ENCODE measurements at regions of chr12 and their contacts with region 1.

Region 1: DNA sequence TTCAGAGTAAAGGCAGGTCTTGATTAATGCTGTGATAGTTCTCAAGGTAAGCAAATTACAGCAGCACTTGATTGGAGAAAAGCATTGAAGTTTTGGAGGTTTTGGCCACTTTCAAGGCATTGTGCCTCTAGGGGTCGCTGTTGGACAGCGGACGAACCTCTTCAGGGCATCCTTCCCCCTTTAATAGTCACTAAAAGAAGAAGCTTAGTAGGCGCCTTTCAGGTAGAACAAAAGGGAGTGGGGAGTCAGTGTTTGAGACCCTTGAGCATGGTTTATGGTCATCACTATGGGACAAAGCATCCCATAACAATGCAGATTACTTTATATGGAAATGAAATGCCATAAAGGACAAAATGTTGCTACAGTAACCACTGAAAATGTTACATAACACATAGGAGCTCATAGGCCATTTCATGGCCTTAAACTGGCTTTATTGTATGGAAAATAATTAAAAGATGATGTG is 199.5 kb upstream of the DCN start:
- DNase-seq: peak; percentile 72 to 93 (median 85)
- ATAC-seq: peak; percentile 85
- H3K4me3 ChIP-seq: peak overlapping the region in 1 of 2 experiments; percentile 24
- H3K4me3 Mint-ChIP-seq: peak overlapping the region; percentile 76
- H3K27ac ChIP-seq: no peak overlapping the region
- H3K27ac Mint-ChIP-seq: peak overlapping the region; percentile 80
- H3K4me1 ChIP-seq: peaks cover 4% of the 10 kb centered on the region
- H3K4me1 Mint-ChIP-seq: peaks cover 10% of the 10 kb centered on the region
- H3K27me3 ChIP-seq: peaks cover 0 to 2% of the 10 kb centered on the region in 2 experiments
- H3K27me3 Mint-ChIP-seq: peaks cover 2% of the 10 kb centered on the region
- CTCF ChIP-seq: peak; percentile 84

Region 2: DNA sequence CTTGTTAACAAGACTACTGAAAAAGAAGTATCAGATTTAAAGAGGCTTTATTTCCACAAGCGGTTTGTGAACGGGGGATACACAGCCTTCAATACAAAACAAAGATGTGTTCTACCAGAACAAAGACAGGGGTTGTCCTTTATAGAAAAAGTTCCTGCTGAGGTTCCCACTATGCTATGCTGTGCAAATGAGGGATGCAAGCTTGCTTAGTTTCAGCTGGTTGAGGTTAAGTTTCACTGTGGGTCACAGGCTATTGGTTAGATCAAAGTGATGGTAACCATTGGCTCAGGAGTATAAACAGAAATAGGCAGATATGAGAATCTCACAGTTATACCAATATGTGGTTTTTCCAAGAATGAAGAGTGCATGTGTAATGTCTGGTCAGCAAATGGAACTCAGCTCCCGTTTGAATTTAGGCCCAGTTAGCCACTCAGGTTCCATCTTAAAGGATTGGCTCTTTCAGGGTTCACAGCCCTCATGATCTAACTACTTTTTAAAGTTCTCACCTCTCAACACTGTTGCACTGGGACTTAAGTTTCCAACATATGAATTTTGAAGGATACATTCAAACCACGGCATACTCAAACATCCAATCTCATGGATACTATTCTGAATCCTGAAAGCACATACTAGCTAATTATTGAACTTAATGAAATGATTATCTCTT is 15.9 kb after region 1 on chr12:
- CTCF ChIA-PET with region 1: interaction called, 41 read pairs
- POLR2A ChIA-PET with region 1: no interaction called
- intact Hi-C with region 1: no loop called
- DNase-seq: no peak
- ATAC-seq: no peak
- H3K4me3 ChIP-seq: no peak overlapping the region
- H3K4me3 Mint-ChIP-seq: no peak overlapping the region
- H3K27ac ChIP-seq: no peak overlapping the region
- H3K27ac Mint-ChIP-seq: no peak overlapping the region
- H3K4me1 ChIP-seq: no peaks in the 10 kb centered on the region
- H3K4me1 Mint-ChIP-seq: no peaks in the 10 kb centered on the region
- H3K27me3 ChIP-seq: no peaks in the 10 kb centered on the region
- H3K27me3 Mint-ChIP-seq: no peaks in the 10 kb centered on the region
- CTCF ChIP-seq: no peak

Region 3: GRCh38 chr12:91833780-91834359 is 451.8 kb after region 1 on chr12:
- CTCF ChIA-PET with region 1: no interaction called
- POLR2A ChIA-PET with region 1: no interaction called
- intact Hi-C with region 1: no loop called
- DNase-seq: no peak
- ATAC-seq: no peak
- H3K4me3 ChIP-seq: no peak overlapping the region
- H3K4me3 Mint-ChIP-seq: no peak overlapping the region
- H3K27ac ChIP-seq: no peak overlapping the region
- H3K27ac Mint-ChIP-seq: no peak overlapping the region
- H3K4me1 ChIP-seq: no peaks in the 10 kb centered on the region
- H3K4me1 Mint-ChIP-seq: peaks cover 26% of the 10 kb centered on the region
- H3K27me3 ChIP-seq: no peaks in the 10 kb centered on the region
- H3K27me3 Mint-ChIP-seq: no peaks in the 10 kb centered on the region
- CTCF ChIP-seq: no peak

Region 4: GRCh38 chr12:91978143-91978542 is 596.0 kb after region 1 on chr12:
- CTCF ChIA-PET with region 1: interaction called, 3 read pairs
- POLR2A ChIA-PET with region 1: no interaction called
- intact Hi-C with region 1: loop called in 1 of 2 experiments (anchors 10 kb)
- DNase-seq: peak in 8 of 9 experiments; percentile 7 to 87 (median 48)
- ATAC-seq: peak; percentile 85
- H3K4me3 ChIP-seq: no peak overlapping the region
- H3K4me3 Mint-ChIP-seq: peak overlapping the region; percentile 2
- H3K27ac ChIP-seq: peak overlapping the region; percentile 40 to 49
- H3K27ac Mint-ChIP-seq: peak overlapping the region; percentile 74
- H3K4me1 ChIP-seq: peaks cover 22% of the 10 kb centered on the region
- H3K4me1 Mint-ChIP-seq: peaks cover 60% of the 10 kb centered on the region
- H3K27me3 ChIP-seq: no peaks in the 10 kb centered on the region
- H3K27me3 Mint-ChIP-seq: no peaks in the 10 kb centered on the region
- CTCF ChIP-seq: no peak

Region 5: GRCh38 chr12:92094751-92095161 is 712.6 kb after region 1 on chr12:
- CTCF ChIA-PET with region 1: no interaction called
- POLR2A ChIA-PET with region 1: no interaction called
- intact Hi-C with region 1: no loop called
- DNase-seq: no peak
- ATAC-seq: no peak
- H3K4me3 ChIP-seq: no peak overlapping the region
- H3K4me3 Mint-ChIP-seq: peak overlapping the region; percentile 13
- H3K27ac ChIP-seq: no peak overlapping the region
- H3K27ac Mint-ChIP-seq: no peak overlapping the region
- H3K4me1 ChIP-seq: peaks cover 33% of the 10 kb centered on the region
- H3K4me1 Mint-ChIP-seq: peaks cover 60% of the 10 kb centered on the region
- H3K27me3 ChIP-seq: no peaks in the 10 kb centered on the region
- H3K27me3 Mint-ChIP-seq: no peaks in the 10 kb centered on the region
- CTCF ChIP-seq: no peak

Region 6: DNA sequence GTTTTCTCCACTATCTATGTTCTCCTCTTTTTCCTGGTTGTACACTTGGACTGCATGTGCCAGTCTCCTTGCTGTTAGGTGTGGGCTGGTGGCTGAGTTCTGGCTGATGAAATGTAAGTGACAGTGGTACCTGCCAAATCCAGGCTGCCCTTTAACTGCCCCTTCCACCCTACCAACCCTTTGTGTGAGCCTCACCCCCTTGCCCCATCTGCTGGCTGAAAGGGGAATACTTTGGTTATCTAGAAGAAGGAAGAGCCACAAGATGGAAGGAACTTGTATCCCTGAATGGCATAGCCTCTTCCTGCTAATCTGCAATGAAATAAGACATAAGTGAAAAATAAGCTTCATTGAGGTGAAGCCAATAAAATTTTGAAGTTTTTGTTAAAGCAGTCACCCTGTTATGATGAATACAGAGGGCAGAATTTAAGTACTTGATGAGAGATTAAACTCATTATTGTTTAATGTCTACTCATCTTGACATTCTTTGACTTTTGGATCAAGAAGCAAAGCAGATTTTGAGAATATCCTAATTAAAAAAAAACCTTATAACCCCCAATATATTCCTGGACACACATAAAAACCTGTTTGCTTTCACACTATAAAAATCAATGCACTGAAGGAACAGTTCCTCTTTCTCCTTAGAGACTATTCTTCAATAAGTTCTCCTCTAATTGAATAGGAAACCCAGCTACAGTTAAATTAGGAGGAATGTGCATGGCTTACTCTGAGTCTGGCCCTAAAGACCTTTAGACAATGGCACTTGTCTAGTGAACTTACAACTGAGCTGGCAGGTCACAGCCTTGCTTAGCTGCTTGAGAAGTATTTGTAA is 1026.2 kb after region 1 on chr12:
- CTCF ChIA-PET with region 1: interaction called, 15 read pairs
- POLR2A ChIA-PET with region 1: no interaction called
- intact Hi-C with region 1: loop called (anchors 5 kb)
- DNase-seq: peak in 5 of 9 experiments; percentile 12 to 74 (median 39)
- ATAC-seq: peak; percentile 26
- H3K4me3 ChIP-seq: no peak overlapping the region
- H3K4me3 Mint-ChIP-seq: no peak overlapping the region
- H3K27ac ChIP-seq: no peak overlapping the region
- H3K27ac Mint-ChIP-seq: peak overlapping the region; percentile 55
- H3K4me1 ChIP-seq: peaks cover 30% of the 10 kb centered on the region
- H3K4me1 Mint-ChIP-seq: peaks cover 55% of the 10 kb centered on the region
- H3K27me3 ChIP-seq: no peaks in the 10 kb centered on the region
- H3K27me3 Mint-ChIP-seq: no peaks in the 10 kb centered on the region
- CTCF ChIP-seq: peak; percentile 54

Region 7: DNA sequence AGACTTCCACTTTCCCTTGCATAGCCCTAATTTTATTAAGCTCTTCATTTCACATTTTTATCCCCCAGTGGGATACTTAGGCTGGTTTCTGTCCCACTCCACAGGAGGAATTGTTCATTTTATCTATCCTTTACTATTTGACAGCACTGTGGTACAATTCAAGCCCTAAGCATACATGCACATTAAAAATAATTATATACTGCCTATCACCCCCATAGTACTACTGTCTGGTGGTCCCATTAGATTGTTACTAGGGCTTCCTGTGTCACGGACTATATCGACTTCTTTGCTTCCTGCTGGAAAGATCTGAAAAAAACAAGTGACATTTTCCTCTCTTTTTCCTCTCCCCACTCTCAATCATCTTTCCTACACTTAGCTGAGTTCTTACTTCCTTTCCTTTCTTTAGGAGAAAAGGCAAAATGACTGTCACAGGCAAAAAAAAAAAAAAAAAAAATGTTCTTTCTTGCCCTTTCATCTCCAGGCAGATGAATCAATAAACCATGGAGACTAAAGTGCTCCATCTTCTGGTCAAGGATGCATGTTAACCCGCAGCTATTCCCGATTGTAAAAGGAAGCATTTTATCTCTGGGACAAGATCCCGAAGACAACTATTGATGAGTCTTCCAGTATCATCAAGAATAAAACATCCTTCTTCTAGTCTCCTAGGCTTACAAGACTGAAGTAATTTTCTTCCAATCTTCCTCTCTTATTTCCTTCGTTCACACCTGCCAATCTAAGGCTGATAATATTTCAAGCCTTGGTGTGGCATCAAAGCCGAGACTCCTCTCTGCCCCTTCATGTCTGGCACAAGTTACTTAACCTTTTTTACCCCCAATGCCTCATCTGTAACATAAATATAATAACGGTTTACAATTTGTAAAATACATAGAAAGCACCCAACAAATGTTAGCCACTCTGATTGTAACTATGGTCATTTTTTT is 1226.3 kb after region 1 on chr12:
- CTCF ChIA-PET with region 1: interaction called, 3 read pairs
- POLR2A ChIA-PET with region 1: no interaction called
- intact Hi-C with region 1: loop called in 1 of 2 experiments (anchors 1 kb)
- DNase-seq: peak in 2 of 9 experiments; percentile 55 to 69
- ATAC-seq: no peak
- H3K4me3 ChIP-seq: no peak overlapping the region
- H3K4me3 Mint-ChIP-seq: peak overlapping the region; percentile 51
- H3K27ac ChIP-seq: no peak overlapping the region
- H3K27ac Mint-ChIP-seq: peak overlapping the region; percentile 24
- H3K4me1 ChIP-seq: no peaks in the 10 kb centered on the region
- H3K4me1 Mint-ChIP-seq: peaks cover 10% of the 10 kb centered on the region
- H3K27me3 ChIP-seq: no peaks in the 10 kb centered on the region
- H3K27me3 Mint-ChIP-seq: no peaks in the 10 kb centered on the region
- CTCF ChIP-seq: no peak

Region 8: DNA sequence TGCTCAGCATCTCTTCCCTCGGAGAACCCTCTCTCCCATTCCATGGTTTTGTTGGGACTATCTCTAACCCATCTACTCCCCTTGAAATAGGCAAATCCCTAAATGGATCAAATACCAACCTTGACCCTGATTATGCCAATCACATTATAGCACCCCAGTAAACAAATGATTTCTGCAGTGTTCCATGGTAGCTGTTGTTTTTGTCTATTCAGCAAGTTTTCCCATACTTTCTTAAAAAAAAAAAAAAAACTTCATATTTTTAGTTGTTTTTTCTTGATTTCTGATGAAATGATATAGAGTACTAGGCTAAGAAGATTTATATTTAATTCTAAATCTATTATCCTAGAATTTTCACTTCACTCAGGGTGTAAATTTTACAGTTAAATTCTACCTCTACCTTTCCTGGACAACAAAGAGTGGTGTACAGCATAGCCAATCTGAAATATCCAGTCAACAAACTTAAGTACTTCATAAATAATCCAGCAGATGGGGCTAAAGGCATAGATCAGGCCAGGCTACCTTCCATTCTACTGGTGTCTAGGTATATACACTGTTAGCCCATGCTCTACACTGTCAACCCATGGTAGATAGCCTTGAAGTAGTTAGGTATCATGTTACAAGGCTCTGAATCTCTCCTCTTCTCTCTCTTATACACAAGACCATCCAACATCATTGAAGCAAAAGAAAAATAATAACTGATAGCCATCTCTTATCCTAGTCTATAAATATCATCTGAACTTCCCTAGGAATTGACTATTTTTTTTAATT is 1402.9 kb after region 1 on chr12:
- CTCF ChIA-PET with region 1: interaction called, 3 read pairs
- POLR2A ChIA-PET with region 1: no interaction called
- intact Hi-C with region 1: loop called in 1 of 2 experiments (anchors 5 kb)
- DNase-seq: peak in 3 of 9 experiments; percentile 28 to 77 (median 68)
- ATAC-seq: peak; percentile 99
- H3K4me3 ChIP-seq: no peak overlapping the region
- H3K4me3 Mint-ChIP-seq: no peak overlapping the region
- H3K27ac ChIP-seq: no peak overlapping the region
- H3K27ac Mint-ChIP-seq: no peak overlapping the region
- H3K4me1 ChIP-seq: no peaks in the 10 kb centered on the region
- H3K4me1 Mint-ChIP-seq: peaks cover 11% of the 10 kb centered on the region
- H3K27me3 ChIP-seq: no peaks in the 10 kb centered on the region
- H3K27me3 Mint-ChIP-seq: no peaks in the 10 kb centered on the region
- CTCF ChIP-seq: peak; percentile 61